Activated CD4-positive, alpha-beta memory T cell treated with anti-CD3 and anti-CD28 coated beads for 36 hours (primary cell): ENCODE measurements at regions of chr11 and their contacts with region 1.

Region 1: DNA sequence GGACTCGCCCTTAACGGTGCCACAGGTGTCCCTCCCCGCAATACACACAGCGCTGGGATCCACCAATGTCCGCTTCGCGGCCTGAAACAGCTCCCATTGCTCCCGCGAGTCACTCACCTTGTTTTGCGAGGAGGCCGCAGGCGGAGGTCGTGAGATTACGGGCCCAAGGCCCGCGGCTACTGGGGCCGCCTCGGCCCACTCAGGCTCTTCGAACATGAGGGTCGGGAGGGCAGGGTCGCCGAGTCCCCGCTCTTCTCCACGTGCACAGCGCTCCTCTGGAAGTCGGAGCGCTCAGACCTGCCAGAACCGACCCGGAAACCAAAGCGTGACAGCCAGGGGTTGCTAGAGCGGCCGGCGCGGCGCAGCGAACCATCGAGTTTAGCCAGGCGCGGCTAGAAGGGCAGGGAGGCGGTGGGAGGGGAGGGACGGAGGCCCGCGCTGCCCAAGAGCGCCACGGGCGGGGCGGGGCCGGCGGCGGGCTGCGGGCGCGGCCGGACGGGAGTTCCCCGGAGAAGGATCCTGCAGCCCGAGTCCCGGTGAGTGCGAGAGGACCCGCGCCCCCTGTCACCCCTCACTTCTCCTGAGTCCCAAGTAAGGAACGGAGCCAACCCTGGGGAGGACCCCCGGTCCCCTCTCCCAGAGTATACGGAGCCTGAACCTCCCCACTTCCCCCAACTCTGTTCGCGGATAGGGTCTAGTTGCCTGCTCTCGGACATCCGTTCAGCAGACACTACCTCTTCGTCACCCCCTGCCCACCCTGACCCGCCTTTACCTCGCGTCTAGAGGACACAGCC is at the starts of genes ILK and RRP8:
- DNase-seq: peak; percentile 93
- H3K4me3 Mint-ChIP-seq: no peak within 1 kb of the TSS
- H3K27ac Mint-ChIP-seq: no peak within 1 kb of the TSS
- H3K4me1 Mint-ChIP-seq: peaks cover 26% of the 10 kb centered on the region
- H3K27me3 Mint-ChIP-seq: no peaks in the 10 kb centered on the region
- total RNA-seq, gene ILK: 89.2 to 95.8 TPM
- total RNA-seq, gene RRP8: 34.9 to 37.5 TPM

Region 2: DNA sequence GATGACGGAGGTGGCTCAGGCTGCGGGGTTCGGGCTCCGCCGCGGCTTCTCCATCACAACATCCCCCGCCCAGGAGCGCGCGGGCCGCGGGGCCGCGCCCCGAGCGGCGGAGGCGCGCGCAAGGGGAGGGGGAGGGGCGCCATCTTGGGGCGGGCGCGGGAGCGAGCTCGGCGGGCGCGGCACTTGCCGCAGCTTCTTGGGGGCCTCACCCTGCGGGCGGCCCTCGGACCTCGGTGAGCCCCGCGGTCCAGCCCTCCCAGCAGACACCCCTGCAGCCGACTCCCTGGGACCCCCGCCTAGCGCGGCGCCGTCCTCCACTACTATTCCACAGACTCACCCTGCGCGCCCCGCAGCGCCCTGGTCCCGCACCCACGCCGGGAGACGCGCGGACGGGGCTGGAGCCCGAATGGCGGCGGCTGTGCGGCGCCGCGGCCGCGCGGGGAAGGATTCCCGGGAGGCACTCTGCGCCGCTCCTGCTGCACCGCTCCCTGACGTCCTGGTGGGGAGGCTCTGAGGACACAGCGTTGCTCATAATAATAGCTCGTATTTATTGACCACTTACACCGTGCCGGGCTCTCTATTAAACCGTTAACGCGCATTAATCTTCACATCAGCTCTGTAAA is 184.4 kb before region 1 on chr11 and contains the start of gene APBB1:
- CTCF ChIA-PET with region 1: no interaction called
- POLR2A ChIA-PET with region 1: no interaction called
- intact Hi-C with region 1: loop called (anchors 1 kb)
- DNase-seq: peak; percentile 78
- H3K4me3 Mint-ChIP-seq: peak within 1 kb of the TSS; percentile 73
- H3K27ac Mint-ChIP-seq: peak within 1 kb of the TSS; percentile 61
- H3K4me1 Mint-ChIP-seq: peaks cover 8% of the 10 kb centered on the region
- H3K27me3 Mint-ChIP-seq: peaks cover 5% of the 10 kb centered on the region
- total RNA-seq, gene APBB1: 51.6 to 55.3 TPM

Region 3: GRCh38 chr11:6531267-6531752 is 72.2 kb before region 1 on chr11:
- CTCF ChIA-PET with region 1: interaction called, 8 read pairs
- POLR2A ChIA-PET with region 1: interaction called, 3 read pairs
- intact Hi-C with region 1: loop called (anchors 2 kb)
- DNase-seq: no peak
- H3K4me3 Mint-ChIP-seq: no peak overlapping the region
- H3K27ac Mint-ChIP-seq: no peak overlapping the region
- H3K4me1 Mint-ChIP-seq: peaks cover 11% of the 10 kb centered on the region
- H3K27me3 Mint-ChIP-seq: no peaks in the 10 kb centered on the region

Region 4: DNA sequence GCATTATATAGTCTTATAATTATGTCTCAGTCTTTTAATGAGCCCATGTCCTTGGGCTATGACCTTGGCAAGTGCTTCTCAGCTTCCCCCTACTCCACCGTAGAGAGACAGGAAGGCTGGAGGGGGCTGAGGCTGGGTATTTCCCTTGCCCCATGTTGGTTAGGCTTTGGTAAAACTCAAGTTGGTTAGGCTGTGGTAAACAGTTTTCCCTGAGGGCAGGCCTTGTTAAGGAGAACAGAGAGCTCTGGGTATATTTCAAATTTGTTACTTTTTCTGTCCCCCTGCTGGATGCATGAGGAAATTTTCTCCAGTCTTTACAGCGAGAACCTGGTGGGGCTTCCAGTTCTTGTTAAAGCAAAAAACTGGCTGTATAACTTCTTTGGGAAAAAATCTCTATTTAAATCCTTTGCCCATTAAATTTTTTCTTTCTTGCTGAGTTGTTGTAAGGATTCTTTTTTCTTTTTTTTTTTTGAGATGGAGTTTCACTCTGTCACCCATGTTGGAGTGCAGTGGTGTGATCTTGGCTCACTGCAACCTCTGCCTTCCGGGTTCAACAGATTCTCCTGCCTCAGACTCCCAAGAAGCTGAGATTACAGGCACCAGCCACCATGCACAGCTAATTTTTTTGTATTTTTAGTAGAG is 64.4 kb after region 1 on chr11:
- CTCF ChIA-PET with region 1: interaction called, 32 read pairs
- POLR2A ChIA-PET with region 1: interaction called, 3 read pairs
- intact Hi-C with region 1: loop called (anchors 1 kb)
- DNase-seq: peak; percentile 66
- H3K4me3 Mint-ChIP-seq: no peak overlapping the region
- H3K27ac Mint-ChIP-seq: peak overlapping the region; percentile 50
- H3K4me1 Mint-ChIP-seq: peaks cover 60% of the 10 kb centered on the region
- H3K27me3 Mint-ChIP-seq: no peaks in the 10 kb centered on the region

Region 5: DNA sequence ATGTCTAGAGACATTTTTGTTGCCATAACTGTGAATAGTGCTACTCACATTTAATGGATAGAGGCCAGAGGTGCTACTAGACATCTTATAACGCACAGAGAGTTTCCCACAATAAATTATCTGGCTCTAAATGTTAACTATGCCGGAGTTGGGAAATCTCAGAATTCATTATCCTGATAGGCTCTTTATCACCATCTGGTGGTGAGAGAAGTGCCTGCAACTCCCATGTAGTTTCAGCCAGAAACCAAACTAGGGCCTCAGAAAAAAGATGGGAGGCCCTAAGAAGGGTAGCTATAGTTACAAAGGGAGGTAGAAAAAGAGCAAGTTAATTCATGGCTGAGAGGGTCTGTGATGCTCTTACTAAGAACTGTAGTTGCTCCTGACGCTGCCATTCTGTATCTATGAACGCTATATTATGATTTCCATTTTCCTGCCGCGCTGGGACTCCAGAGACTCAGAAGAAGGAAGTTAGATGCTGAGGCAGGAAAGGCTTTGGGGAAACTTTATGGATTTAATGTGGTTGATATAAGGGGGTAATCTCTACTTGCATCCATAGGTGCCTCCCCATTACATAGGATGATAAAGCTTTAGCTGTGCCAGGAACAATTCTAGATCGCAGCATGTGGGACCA is 102.5 kb after region 1 on chr11:
- CTCF ChIA-PET with region 1: interaction called, 5 read pairs
- POLR2A ChIA-PET with region 1: no interaction called
- intact Hi-C with region 1: loop called (anchors 1 kb)
- DNase-seq: peak; percentile 53
- H3K4me3 Mint-ChIP-seq: no peak overlapping the region
- H3K27ac Mint-ChIP-seq: peak overlapping the region; percentile 57
- H3K4me1 Mint-ChIP-seq: peaks cover 18% of the 10 kb centered on the region
- H3K27me3 Mint-ChIP-seq: no peaks in the 10 kb centered on the region

Region 6: DNA sequence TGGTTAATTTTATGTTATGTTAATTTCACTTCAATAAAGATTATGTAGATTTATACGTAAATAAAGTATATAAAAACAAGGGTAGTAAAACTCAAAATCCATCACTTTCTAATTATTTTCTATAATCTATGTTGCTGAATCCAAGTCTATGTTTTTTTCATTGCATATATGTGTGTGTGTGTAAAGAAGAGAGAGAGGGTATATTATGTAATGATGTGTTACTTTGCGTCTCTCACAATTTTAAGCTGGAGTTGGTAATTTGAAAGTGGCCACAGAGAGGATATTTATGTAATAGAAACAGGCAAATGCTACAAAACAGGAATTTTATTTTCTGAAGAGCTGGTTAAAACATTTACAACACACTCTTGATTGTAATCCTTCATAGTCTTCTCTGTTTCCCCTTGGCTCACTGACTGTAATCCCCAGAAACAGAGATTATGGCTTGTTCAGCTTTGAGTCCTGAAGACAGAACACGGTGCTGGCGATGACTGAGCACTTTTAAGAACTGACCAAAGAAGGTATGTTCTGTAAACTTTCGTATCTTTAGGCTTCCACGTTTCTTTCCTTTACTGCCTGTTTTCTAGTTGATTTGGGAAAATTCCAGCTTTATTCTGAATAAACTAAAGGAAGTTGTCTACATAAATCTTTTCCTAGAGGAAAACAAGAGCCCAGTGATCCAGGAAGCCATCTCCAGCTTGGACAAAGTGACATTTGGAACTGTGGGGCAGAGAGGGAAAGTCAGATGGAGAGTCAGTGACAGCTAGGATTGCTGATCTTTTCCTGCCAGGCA is 124.7 kb after region 1 on chr11:
- CTCF ChIA-PET with region 1: no interaction called
- POLR2A ChIA-PET with region 1: no interaction called
- intact Hi-C with region 1: no loop called
- DNase-seq: no peak
- H3K4me3 Mint-ChIP-seq: no peak overlapping the region
- H3K27ac Mint-ChIP-seq: peak overlapping the region; percentile 52
- H3K4me1 Mint-ChIP-seq: peaks cover 77% of the 10 kb centered on the region
- H3K27me3 Mint-ChIP-seq: no peaks in the 10 kb centered on the region

Region 7: GRCh38 chr11:6757373-6757967 is 154.0 kb after region 1 on chr11:
- CTCF ChIA-PET with region 1: interaction called, 6 read pairs
- POLR2A ChIA-PET with region 1: no interaction called
- intact Hi-C with region 1: loop called (anchors 1 kb)
- DNase-seq: peak; percentile 74
- H3K4me3 Mint-ChIP-seq: no peak overlapping the region
- H3K27ac Mint-ChIP-seq: no peak overlapping the region
- H3K4me1 Mint-ChIP-seq: peaks cover 6% of the 10 kb centered on the region
- H3K27me3 Mint-ChIP-seq: peaks cover 1% of the 10 kb centered on the region